Common myeloid progenitor, CD34-positive (primary cell): ENCODE measurements at regions of chr5 and their contacts with region 1.

Region 1: DNA sequence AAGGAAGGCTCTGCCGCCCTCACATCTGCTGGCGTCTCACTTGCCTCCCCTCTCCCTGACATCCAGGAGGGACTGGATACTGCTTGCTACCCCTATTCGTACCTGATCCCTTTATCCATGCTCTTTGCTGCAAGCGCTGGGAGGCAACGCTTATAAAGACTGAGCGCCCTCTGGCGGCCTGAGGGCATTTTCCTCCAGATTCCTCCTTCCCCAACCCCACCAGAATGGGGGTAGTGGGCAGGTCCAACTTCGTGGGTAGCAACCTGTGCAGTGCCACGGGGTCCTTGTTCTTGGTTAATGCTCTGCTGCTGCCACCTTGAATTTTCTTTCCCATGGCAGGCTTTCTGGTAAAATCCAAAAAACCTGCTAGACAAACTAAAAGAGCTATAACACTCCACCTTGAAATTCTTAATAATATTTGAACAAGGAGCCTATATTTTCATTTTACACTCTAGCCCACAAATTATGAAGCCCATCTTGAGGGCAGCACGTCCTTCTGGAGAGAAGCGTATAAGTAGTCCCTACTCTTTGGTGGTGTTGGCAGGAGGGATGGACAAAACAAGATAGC is 52.4 kb downstream of the JADE2 start:
- DNase-seq: peak; percentile 76 to 88 (median 86)
- H3K4me3 ChIP-seq: no peak overlapping the region
- H3K27ac ChIP-seq: no peak overlapping the region
- H3K4me1 ChIP-seq: peaks cover 0 to 5% (median 0%) of the 10 kb centered on the region in 4 experiments
- H3K27me3 ChIP-seq: no peaks in the 10 kb centered on the region

Region 2: DNA sequence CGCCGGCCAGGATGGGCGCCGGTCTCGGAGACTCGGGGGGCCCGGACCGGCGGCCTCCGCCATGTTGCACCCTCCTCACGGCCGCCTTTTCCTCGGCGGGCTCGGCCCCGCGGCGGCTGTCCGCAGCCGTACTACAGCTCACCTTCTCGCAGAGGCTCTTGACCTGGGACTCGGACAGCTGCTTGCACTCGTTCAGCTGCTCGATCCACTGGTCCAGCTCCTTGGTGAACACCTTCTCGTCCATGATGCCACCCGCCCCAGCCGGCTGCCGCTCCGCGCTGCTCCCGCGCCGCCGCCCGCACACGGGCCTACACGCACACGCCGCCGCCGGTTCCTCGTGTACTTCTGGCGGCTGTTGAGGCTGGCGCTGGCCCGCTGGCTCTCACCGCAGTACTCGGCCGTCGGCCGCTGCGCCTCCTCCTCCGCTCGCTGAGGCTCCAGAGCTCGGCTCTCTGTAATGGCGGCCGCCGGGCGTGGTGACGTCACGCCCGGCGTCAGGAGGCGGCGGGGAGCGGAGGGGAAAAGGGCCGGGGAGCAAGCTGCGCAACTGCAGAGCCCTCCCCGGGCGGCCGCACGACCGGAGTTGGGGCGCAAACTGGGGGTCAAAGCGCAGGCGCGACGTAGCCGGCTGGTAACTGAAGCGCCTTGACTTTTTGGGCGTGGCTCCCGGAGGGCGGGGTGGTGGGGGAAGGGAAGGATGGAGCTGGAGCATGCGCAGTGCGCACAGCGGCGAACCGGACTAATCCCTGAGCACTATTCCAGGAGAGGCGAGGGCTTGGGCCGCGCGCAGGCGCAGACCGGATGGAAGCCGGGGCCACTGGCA is 352.1 kb before region 1 on chr5 and contains the start of gene PPP2CA:
- CTCF ChIA-PET with region 1: no interaction called
- POLR2A ChIA-PET with region 1: no interaction called
- DNase-seq: peak; percentile 98 to 99 (median 99)
- H3K4me3 ChIP-seq: peak within 1 kb of the TSS; percentile 95 to 100 (median 98)
- H3K27ac ChIP-seq: peak within 1 kb of the TSS; percentile 99 to 100
- H3K4me1 ChIP-seq: peaks cover 25 to 44% (median 33%) of the 10 kb centered on the region in 4 experiments
- H3K27me3 ChIP-seq: no peaks in the 10 kb centered on the region

Region 3: GRCh38 chr5:134380346-134380745 is 197.5 kb before region 1 on chr5:
- CTCF ChIA-PET with region 1: interaction called, 15 read pairs
- POLR2A ChIA-PET with region 1: no interaction called
- DNase-seq: no peak
- H3K4me3 ChIP-seq: no peak overlapping the region
- H3K27ac ChIP-seq: no peak overlapping the region
- H3K4me1 ChIP-seq: no peaks in the 10 kb centered on the region
- H3K27me3 ChIP-seq: no peaks in the 10 kb centered on the region

Region 4: DNA sequence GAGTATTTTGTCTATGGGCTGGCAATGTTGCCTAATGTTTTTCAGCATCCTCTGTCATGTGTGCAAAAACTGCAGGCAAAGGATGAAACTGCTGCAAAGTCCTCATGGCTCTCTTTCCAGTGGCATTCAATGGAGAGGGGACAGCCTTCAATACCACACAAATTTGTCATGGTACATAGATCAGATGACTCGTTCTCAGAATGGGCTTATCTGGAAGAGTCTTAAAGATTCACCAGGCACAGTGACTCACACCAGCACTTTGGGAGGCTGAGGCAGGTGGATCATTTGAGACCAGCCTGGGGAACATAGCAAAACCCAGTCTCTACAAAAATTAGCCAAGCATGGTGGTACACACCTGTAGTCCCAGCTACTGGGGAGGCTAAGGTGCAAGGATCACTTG is 171.5 kb before region 1 on chr5:
- CTCF ChIA-PET with region 1: interaction called, 12 read pairs
- POLR2A ChIA-PET with region 1: no interaction called
- DNase-seq: no peak
- H3K4me3 ChIP-seq: no peak overlapping the region
- H3K27ac ChIP-seq: no peak overlapping the region
- H3K4me1 ChIP-seq: peaks cover 7 to 14% (median 12%) of the 10 kb centered on the region in 4 experiments
- H3K27me3 ChIP-seq: no peaks in the 10 kb centered on the region

Region 5: GRCh38 chr5:134533115-134533815 is 44.6 kb before region 1 on chr5:
- CTCF ChIA-PET with region 1: interaction called, 20 read pairs
- POLR2A ChIA-PET with region 1: interaction called, 5 read pairs
- DNase-seq: no peak
- H3K4me3 ChIP-seq: no peak overlapping the region
- H3K27ac ChIP-seq: peak overlapping the region in 1 of 2 experiments; percentile 39
- H3K4me1 ChIP-seq: peaks cover 5 to 56% (median 30%) of the 10 kb centered on the region in 4 experiments
- H3K27me3 ChIP-seq: no peaks in the 10 kb centered on the region

Region 6: DNA sequence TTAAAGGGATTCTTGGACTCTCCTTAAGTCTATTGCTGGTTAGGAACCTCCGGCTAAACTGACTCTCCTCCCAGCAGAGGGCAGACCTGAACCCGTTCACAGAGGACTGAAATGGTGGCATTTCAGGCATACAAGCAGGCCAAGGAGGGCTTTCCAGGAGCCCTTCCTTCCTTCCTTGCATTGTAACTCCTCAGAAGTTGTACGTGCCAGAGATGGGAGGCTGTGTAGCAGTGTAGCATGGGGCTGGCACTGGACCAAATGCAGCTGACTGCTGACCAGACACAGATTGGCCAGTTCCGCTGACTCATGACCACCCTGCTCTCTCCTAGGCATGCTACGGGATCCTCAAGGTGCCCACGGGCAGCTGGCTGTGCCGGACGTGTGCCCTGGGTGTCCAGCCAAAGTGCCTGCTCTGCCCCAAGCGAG is 16.0 kb before region 1 on chr5:
- CTCF ChIA-PET with region 1: interaction called, 13 read pairs
- POLR2A ChIA-PET with region 1: no interaction called
- DNase-seq: peak in 2 of 3 donors; percentile 35 to 37
- H3K4me3 ChIP-seq: no peak overlapping the region
- H3K27ac ChIP-seq: peak overlapping the region in 1 of 2 experiments; percentile 22
- H3K4me1 ChIP-seq: peaks cover 0 to 3% (median under 1%) of the 10 kb centered on the region in 4 experiments
- H3K27me3 ChIP-seq: no peaks in the 10 kb centered on the region

Region 7: DNA sequence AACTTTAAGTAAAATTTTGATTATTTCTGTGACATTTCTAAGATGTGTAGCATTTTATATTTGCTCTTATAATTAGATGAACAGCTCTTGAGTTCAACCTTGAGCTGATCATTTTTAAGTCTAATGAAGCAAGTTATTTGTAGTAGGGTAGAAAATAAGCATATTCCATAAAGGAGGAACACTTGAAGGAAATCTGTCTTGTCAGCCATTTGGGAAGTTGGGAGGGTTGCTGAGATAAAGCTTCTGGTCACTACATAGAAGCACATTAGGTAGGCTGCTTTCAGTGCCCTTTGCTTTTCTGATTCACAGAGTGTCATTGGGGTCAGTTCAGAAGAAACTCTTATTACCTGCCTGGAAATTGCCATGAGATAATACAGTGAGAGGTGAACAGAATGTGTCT is 114.8 kb after region 1 on chr5:
- CTCF ChIA-PET with region 1: no interaction called
- POLR2A ChIA-PET with region 1: no interaction called
- DNase-seq: no peak
- H3K4me3 ChIP-seq: no peak overlapping the region
- H3K27ac ChIP-seq: no peak overlapping the region
- H3K4me1 ChIP-seq: no peaks in the 10 kb centered on the region
- H3K27me3 ChIP-seq: no peaks in the 10 kb centered on the region